ENCODE measurements at regions of chr3 and their contacts with region 1.

Region 1: GRCh38 chr3:168040607-168041208 is 55.0 kb downstream of the GOLIM4 start:
- DNase-seq: no peak

Region 2: GRCh38 chr3:167837466-167837865 is 203.2 kb before region 1 on chr3:
- intact Hi-C with region 1: loop called (anchors 5 kb)
- DNase-seq: no peak

Region 3: DNA sequence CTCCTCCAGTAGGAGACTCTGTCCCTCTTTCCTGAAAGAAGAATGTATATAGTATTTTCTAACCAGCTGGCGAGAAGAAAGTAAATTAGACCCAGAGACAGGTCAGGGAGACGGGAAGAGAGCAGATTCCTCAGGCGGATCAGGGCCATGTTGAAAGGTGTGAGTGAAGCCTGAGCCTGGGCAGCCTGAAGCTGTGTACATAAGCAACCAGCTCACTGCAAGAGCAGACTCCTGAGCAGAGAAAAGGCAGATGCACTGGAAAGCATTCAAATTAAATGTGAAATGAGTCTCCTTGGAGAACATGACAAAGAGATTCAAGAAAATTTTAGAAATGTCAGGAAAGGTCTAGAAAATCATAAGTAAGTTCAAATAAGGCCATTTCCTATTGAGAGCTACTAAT is 110.7 kb before region 1 on chr3:
- intact Hi-C with region 1: loop called (anchors 2 kb)
- DNase-seq: no peak

Region 4: DNA sequence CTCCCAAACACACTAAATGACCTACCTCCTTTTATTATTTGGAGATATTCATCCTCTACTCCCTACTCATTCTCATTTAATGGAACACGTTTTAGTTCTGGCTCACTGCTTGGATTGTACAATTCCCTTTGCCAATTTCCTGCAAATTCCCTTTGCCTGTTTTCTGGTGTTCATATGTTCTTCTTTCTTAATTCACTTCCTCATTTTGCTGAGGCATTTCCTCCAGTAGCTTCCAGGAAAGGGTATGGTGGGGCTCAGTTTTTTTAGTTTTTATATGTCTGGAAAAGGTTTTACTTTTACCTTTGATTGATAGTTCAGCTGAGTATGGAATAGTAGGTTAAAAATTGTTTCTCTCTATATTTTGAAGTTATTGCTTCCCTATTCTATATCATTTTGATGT is 198.6 kb after region 1 on chr3:
- intact Hi-C with region 1: no loop called
- DNase-seq: no peak